Natural killer cell (primary cell): ENCODE measurements at regions of chr11 and their contacts with region 1.

Region 1: GRCh38 chr11:128551611-128552335 is 35.6 kb downstream of the ETS1 start:
- DNase-seq: peak; percentile 27 to 72
- ATAC-seq: peak; percentile 89 to 90 (median 89)
- H3K4me3 ChIP-seq: no peak overlapping the region
- H3K4me3 Mint-ChIP-seq: peak overlapping the region; percentile 55
- H3K27ac ChIP-seq: peak overlapping the region; percentile 87
- H3K27ac Mint-ChIP-seq: peak overlapping the region; percentile 97
- H3K4me1 ChIP-seq: peaks cover 53% of the 10 kb centered on the region
- H3K4me1 Mint-ChIP-seq: peaks cover 57 to 61% of the 10 kb centered on the region in 2 donors
- H3K27me3 ChIP-seq: no peaks in the 10 kb centered on the region
- H3K27me3 Mint-ChIP-seq: no peaks in the 10 kb centered on the region
- CTCF ChIP-seq: no peak

Region 2: DNA sequence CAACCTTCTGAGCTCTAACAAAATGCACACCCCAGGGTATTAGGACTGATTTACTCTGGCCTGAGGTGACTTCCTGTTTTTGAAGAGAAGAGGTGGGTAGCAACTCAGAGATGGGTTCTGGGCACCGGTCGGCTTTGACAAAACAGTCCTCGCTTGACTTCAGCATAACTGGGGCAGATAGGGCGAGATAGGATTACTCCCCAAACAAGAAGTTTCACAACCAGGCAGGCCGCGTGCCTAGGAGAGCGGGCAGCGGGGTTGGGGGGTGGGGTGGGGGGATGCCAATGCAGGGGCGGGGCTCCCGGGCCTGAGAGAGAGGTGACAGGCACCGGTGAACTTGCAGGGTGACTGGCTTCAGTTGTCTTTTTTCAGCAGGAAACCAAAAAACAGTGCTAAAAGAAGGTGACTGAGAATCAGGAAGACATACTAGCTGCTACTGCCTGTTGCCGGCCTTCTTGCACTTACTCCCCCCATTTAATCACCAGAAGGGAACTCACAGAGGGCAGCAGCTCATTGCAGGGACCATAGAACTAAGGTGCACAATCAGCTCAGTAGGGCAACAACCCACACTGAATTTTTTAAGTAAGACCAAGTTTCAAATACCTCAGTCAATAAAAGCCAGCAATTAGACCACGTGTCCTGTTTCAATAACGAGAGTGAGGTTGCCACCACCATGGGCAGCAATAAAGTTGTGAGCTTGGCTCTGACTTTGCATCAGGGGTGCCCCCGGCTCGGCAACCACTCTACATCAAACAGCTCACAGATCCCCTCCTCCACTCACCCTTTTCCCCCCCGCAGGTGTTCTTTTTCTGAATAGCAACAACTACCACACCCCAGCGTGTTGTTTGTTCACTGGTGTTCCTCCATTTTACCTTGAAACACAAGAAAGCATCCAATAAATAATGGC is 72.7 kb after region 1 on chr11:
- intact Hi-C with region 1: loop called (anchors 1 kb)
- DNase-seq: peak; percentile 57 to 82
- ATAC-seq: peak; percentile 68 to 82 (median 73)
- H3K4me3 ChIP-seq: no peak overlapping the region
- H3K4me3 Mint-ChIP-seq: peak overlapping the region; percentile 78
- H3K27ac ChIP-seq: peak overlapping the region; percentile 83
- H3K27ac Mint-ChIP-seq: peak overlapping the region; percentile 93 to 97
- H3K4me1 ChIP-seq: peaks cover 69% of the 10 kb centered on the region
- H3K4me1 Mint-ChIP-seq: peaks cover 72 to 77% of the 10 kb centered on the region in 2 donors
- H3K27me3 ChIP-seq: no peaks in the 10 kb centered on the region
- H3K27me3 Mint-ChIP-seq: no peaks in the 10 kb centered on the region
- CTCF ChIP-seq: no peak